ENCODE measurements at regions of chr5 and their contacts with region 1.

Region 1: GRCh38 chr5:33936004-33936380 is 194 bp upstream of the RXFP3 start:
- DNase-seq: peak; percentile 53 to 82 (median 71)
- H3K4me3 ChIP-seq: peak overlapping the region in 1 of 4 donors; percentile 30
- H3K27ac ChIP-seq: no peak overlapping the region
- H3K4me1 ChIP-seq: peaks cover 0 to 27% of the 10 kb centered on the region in 2 donors
- H3K27me3 ChIP-seq: peaks cover 19% of the 10 kb centered on the region
- CTCF ChIP-seq: peak in 4 of 6 experiments; percentile 28 to 46 (median 38)
- POLR2A ChIP-seq: no peak

Region 2: GRCh38 chr5:33439905-33440481 is 496.0 kb before region 1 on chr5:
- intact Hi-C with region 1: loop called (anchors 10 kb)
- DNase-seq: no peak
- H3K4me3 ChIP-seq: peak overlapping the region in 3 of 4 donors; percentile 47 to 83 (median 69)
- H3K27ac ChIP-seq: peak overlapping the region; percentile 28 to 97 (median 94)
- H3K4me1 ChIP-seq: peaks cover 16 to 31% of the 10 kb centered on the region in 2 donors
- H3K27me3 ChIP-seq: no peaks in the 10 kb centered on the region
- CTCF ChIP-seq: no peak
- POLR2A ChIP-seq: no peak

Region 3: GRCh38 chr5:33470544-33470943 is 465.4 kb before region 1 on chr5:
- intact Hi-C with region 1: loop called in 1 of 2 experiments (anchors 10 kb)
- DNase-seq: peak in 5 of 7 donors; percentile 17 to 65 (median 26)
- H3K4me3 ChIP-seq: no peak overlapping the region
- H3K27ac ChIP-seq: no peak overlapping the region
- H3K4me1 ChIP-seq: no peaks in the 10 kb centered on the region
- H3K27me3 ChIP-seq: no peaks in the 10 kb centered on the region
- CTCF ChIP-seq: peak in 3 of 6 experiments; percentile 28 to 60 (median 49)
- POLR2A ChIP-seq: no peak

Region 4: GRCh38 chr5:33850100-33850594 is 85.8 kb before region 1 on chr5:
- intact Hi-C with region 1: loop called in 1 of 2 experiments (anchors 10 kb)
- DNase-seq: peak in 5 of 7 donors; percentile 37 to 73 (median 61)
- H3K4me3 ChIP-seq: no peak overlapping the region
- H3K27ac ChIP-seq: peak overlapping the region in 2 of 5 donors; percentile 40 to 53
- H3K4me1 ChIP-seq: peaks cover 0 to 58% of the 10 kb centered on the region in 2 donors
- H3K27me3 ChIP-seq: no peaks in the 10 kb centered on the region
- CTCF ChIP-seq: no peak
- POLR2A ChIP-seq: no peak

Region 5: GRCh38 chr5:34034534-34035327 is 98.7 kb after region 1 on chr5:
- intact Hi-C with region 1: no loop called
- DNase-seq: no peak
- H3K4me3 ChIP-seq: no peak overlapping the region
- H3K27ac ChIP-seq: no peak overlapping the region
- H3K4me1 ChIP-seq: peaks cover 0 to 9% of the 10 kb centered on the region in 2 donors
- H3K27me3 ChIP-seq: no peaks in the 10 kb centered on the region
- CTCF ChIP-seq: no peak
- POLR2A ChIP-seq: no peak

Region 6: GRCh38 chr5:35617435-35618303 is 1681.7 kb after region 1 on chr5 and contains the start of gene SPEF2:
- intact Hi-C with region 1: no loop called
- DNase-seq: peak; percentile 80 to 94 (median 89)
- H3K4me3 ChIP-seq: peak within 1 kb of the TSS; percentile 71 to 86 (median 78)
- H3K27ac ChIP-seq: peak within 1 kb of the TSS in 1 of 5 donors; percentile 42
- H3K4me1 ChIP-seq: no peaks in the 10 kb centered on the region
- H3K27me3 ChIP-seq: no peaks in the 10 kb centered on the region
- CTCF ChIP-seq: peak; percentile 62 to 84 (median 82)
- POLR2A ChIP-seq: no peak
- total RNA-seq, gene SPEF2: 3.3 to 19.7 (median 9.3) TPM

Measured in adrenal gland (tissue), 19 donors.